ENCODE measurements at regions of chr14 and their contacts with region 1.

Region 1: GRCh38 chr14:59055439-59056045 is 132.9 kb upstream of the DAAM1 start:
- H3K4me3 ChIP-seq: no peak overlapping the region
- H3K27ac ChIP-seq: no peak overlapping the region
- H3K4me1 ChIP-seq: no peaks in the 10 kb centered on the region
- CTCF ChIP-seq: no peak

Region 2: GRCh38 chr14:59067127-59067894 is 11.8 kb after region 1 on chr14:
- CTCF ChIA-PET with region 1: interaction called, 11 read pairs
- POLR2A ChIA-PET with region 1: no interaction called
- H3K4me3 ChIP-seq: no peak overlapping the region
- H3K27ac ChIP-seq: no peak overlapping the region
- H3K4me1 ChIP-seq: no peaks in the 10 kb centered on the region
- CTCF ChIP-seq: no peak

Region 3: DNA sequence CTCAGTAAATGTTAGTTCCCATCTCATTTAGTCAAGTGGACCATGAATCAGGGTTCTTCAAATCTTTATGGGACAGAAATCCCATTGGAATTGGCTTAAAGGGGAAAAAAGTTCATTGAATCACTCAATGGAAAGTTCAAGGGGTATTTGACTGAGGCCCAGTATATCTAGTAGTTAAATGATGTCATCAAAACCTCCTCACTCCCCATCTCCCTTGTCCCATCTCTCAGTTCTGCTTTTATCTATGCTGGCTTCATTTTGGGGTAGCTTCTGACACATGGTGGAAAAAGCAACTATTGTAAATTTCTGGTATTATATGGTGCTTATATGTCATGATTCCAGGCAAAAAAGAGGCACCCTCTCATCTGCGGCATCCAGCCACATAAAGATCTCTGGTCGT is 184.8 kb after region 1 on chr14:
- CTCF ChIA-PET with region 1: no interaction called
- POLR2A ChIA-PET with region 1: no interaction called
- H3K4me3 ChIP-seq: no peak overlapping the region
- H3K27ac ChIP-seq: no peak overlapping the region
- H3K4me1 ChIP-seq: peaks cover 12% of the 10 kb centered on the region
- CTCF ChIP-seq: no peak

Measured in HEK293 (cell line).